CD8-positive, alpha-beta memory T cell (primary cell): ENCODE measurements at regions of chr18 and their contacts with region 1.

Region 1: GRCh38 chr18:3062798-3063680 is 50.1 kb upstream of the LPIN2 start:
- DNase-seq: peak; percentile 40 to 82 (median 41)
- H3K4me3 ChIP-seq: peak overlapping the region; percentile 62
- H3K4me3 Mint-ChIP-seq: peak overlapping the region; percentile 23 to 92 (median 70)
- H3K27ac ChIP-seq: peak overlapping the region; percentile 83
- H3K27ac Mint-ChIP-seq: peak overlapping the region; percentile 70 to 98 (median 97)
- H3K4me1 ChIP-seq: peaks cover 64% of the 10 kb centered on the region
- H3K4me1 Mint-ChIP-seq: peaks cover 74 to 83% (median 80%) of the 10 kb centered on the region in 3 donors
- H3K27me3 ChIP-seq: no peaks in the 10 kb centered on the region
- H3K27me3 Mint-ChIP-seq: no peaks in the 10 kb centered on the region

Region 2: DNA sequence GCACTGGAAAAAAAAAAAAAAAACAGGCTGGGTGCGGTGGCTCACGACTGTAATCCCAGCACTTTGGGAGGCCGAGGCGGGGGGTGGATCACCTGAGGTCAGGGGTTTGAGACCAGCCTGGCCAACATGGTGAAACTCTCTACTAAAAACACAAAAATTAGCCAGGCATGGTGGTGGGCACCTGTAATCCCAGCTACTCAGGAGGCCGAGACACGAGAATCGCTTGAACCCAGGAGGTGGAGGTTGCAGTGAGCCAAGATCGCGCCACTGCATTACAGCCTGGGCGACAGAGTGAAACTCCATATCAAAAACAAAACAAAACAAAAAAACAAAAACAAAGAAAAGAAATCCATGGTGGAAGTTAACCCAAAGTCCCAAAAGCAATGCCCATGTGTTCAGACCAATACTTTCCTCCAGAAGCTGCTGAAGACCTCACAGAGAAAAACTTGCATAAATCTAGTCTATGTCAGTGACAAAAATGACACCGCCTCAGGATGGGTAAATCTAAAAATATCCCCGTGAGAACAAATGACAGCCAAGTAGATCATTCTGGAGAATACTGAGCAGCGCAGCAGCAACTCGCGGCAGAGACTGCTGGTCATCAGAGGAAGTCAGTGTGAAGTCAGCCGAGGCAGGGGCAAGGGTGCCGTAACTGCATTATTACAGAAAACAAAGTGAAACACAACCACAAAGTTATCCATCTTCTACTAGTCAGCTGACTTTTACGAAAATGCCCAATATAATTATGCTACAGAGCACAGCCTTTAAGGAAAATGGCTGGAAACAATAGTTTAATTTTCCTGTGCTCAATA is 91.1 kb before region 1 on chr18:
- CTCF ChIA-PET with region 1: interaction called, 23 read pairs
- POLR2A ChIA-PET with region 1: interaction called, 8 read pairs
- DNase-seq: peak; percentile 51 to 87 (median 58)
- H3K4me3 ChIP-seq: peak overlapping the region; percentile 51
- H3K4me3 Mint-ChIP-seq: peak overlapping the region; percentile 81 to 91 (median 87)
- H3K27ac ChIP-seq: peak overlapping the region; percentile 71
- H3K27ac Mint-ChIP-seq: peak overlapping the region; percentile 96 to 100 (median 98)
- H3K4me1 ChIP-seq: peaks cover 95% of the 10 kb centered on the region
- H3K4me1 Mint-ChIP-seq: peaks cover 80 to 97% (median 95%) of the 10 kb centered on the region in 3 donors
- H3K27me3 ChIP-seq: no peaks in the 10 kb centered on the region
- H3K27me3 Mint-ChIP-seq: no peaks in the 10 kb centered on the region

Region 3: DNA sequence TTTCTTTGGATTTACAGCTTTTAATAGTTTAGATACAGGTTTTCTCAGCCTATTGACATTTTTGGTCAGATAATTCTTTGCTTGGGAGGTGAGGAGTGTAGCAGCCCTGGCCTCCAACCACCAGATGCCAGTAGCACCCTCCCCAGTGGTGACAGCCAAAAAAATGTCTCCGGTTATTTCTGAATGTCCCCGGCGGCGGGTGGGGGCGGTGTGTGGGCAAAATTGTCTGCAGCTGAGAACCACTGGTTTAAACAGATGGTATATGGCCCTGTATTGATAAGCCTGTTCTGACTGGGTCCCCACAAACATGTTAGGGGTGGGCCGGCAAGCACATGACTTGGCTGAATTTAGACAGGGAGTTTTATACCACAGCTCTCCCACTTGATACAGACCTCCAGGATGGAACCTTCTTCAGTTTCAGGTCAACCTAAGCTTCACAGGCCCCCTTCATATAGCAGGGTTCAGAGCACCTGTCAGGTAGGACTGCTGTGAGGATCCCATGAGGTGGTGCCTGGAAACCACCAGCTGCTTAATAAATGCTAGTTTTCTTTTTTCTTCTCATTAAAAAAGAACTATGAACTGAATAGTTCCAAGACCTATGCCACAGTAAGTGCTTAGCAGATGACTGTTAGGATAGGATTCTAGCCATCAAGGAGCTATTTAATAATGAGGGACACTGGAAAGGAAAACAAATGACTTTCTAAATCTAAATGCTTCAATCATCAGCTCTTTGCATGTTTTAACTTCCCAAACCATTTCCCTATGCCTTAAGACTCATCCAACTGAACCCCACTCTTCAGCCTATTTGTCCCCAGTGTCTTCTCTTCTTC is 68.2 kb before region 1 on chr18:
- CTCF ChIA-PET with region 1: interaction called, 144 read pairs
- POLR2A ChIA-PET with region 1: interaction called, 30 read pairs
- DNase-seq: peak; percentile 41 to 84 (median 73)
- H3K4me3 ChIP-seq: no peak overlapping the region
- H3K4me3 Mint-ChIP-seq: peak overlapping the region; percentile 39 to 86 (median 72)
- H3K27ac ChIP-seq: peak overlapping the region; percentile 39
- H3K27ac Mint-ChIP-seq: peak overlapping the region; percentile 15 to 85 (median 73)
- H3K4me1 ChIP-seq: peaks cover 59% of the 10 kb centered on the region
- H3K4me1 Mint-ChIP-seq: peaks cover 71 to 82% (median 82%) of the 10 kb centered on the region in 3 donors
- H3K27me3 ChIP-seq: no peaks in the 10 kb centered on the region
- H3K27me3 Mint-ChIP-seq: peaks cover 0 to 1% of the 10 kb centered on the region in 2 donors

Region 4: GRCh38 chr18:3037423-3037915 is 25.6 kb before region 1 on chr18:
- CTCF ChIA-PET with region 1: interaction called, 12 read pairs
- POLR2A ChIA-PET with region 1: interaction called, 10 read pairs
- DNase-seq: no peak
- H3K4me3 ChIP-seq: no peak overlapping the region
- H3K4me3 Mint-ChIP-seq: peak overlapping the region in 6 of 7 donors; percentile 13 to 59 (median 30)
- H3K27ac ChIP-seq: peak overlapping the region; percentile 40
- H3K27ac Mint-ChIP-seq: peak overlapping the region in 7 of 8 donors; percentile 53 to 92 (median 85)
- H3K4me1 ChIP-seq: peaks cover 7% of the 10 kb centered on the region
- H3K4me1 Mint-ChIP-seq: peaks cover 6 to 17% (median 16%) of the 10 kb centered on the region in 3 donors
- H3K27me3 ChIP-seq: no peaks in the 10 kb centered on the region
- H3K27me3 Mint-ChIP-seq: peaks cover 0 to 3% of the 10 kb centered on the region in 2 donors

Region 5: DNA sequence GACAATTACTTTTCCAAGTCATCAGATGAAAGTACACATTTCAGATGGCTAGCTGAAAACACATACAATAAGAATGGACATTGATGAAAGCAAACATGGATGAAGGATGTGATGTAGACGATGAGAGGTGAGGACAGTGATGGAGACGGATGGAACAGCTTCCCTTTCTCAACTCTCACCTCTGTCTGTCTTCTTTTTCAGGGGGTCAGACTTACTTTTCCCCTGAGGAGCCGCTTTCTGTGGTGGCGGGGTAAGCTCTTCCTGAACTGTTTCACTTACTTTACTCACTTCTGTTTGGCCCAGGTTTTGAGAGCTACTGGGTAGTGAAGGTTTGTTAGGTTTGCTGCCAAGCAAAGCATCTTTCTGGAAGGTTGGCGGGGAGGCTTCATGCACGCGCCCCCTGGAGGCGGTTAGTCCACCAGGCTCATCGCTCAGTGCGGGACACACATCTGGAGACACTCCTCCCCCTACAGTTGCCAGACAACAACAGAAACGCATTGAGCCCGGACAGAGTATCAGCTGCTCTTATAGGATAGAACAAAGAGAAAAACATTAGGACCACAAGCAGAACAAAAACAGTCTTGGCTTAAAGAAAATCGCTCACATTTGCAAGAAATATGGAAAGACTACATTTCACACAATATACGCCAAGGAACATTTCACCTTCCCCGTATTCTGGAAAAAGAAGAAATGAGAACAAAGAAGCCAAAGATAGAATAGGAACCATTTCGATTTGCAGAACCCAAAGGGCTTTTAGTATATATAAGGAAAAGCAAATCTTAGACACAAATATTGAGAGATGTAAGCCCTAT is 66.2 kb after region 1 on chr18:
- CTCF ChIA-PET with region 1: interaction called, 25 read pairs
- POLR2A ChIA-PET with region 1: interaction called, 3 read pairs
- DNase-seq: peak; percentile 62 to 84 (median 67)
- H3K4me3 ChIP-seq: no peak overlapping the region
- H3K4me3 Mint-ChIP-seq: no peak overlapping the region
- H3K27ac ChIP-seq: no peak overlapping the region
- H3K27ac Mint-ChIP-seq: peak overlapping the region in 4 of 8 donors; percentile 10 to 58 (median 29)
- H3K4me1 ChIP-seq: peaks cover 8% of the 10 kb centered on the region
- H3K4me1 Mint-ChIP-seq: peaks cover 9% of the 10 kb centered on the region in 3 donors
- H3K27me3 ChIP-seq: no peaks in the 10 kb centered on the region
- H3K27me3 Mint-ChIP-seq: peaks cover 0 to 3% of the 10 kb centered on the region in 2 donors

Region 6: GRCh38 chr18:3162181-3162580 is 99.1 kb after region 1 on chr18:
- CTCF ChIA-PET with region 1: no interaction called
- POLR2A ChIA-PET with region 1: no interaction called
- DNase-seq: no peak
- H3K4me3 ChIP-seq: no peak overlapping the region
- H3K4me3 Mint-ChIP-seq: no peak overlapping the region
- H3K27ac ChIP-seq: no peak overlapping the region
- H3K27ac Mint-ChIP-seq: peak overlapping the region in 1 of 8 donors; percentile 70
- H3K4me1 ChIP-seq: no peaks in the 10 kb centered on the region
- H3K4me1 Mint-ChIP-seq: no peaks in the 10 kb centered on the region
- H3K27me3 ChIP-seq: no peaks in the 10 kb centered on the region
- H3K27me3 Mint-ChIP-seq: peaks cover 0 to 1% of the 10 kb centered on the region in 2 donors

Region 7: GRCh38 chr18:3350566-3351527 is 287.8 kb after region 1 on chr18:
- CTCF ChIA-PET with region 1: no interaction called
- POLR2A ChIA-PET with region 1: no interaction called
- DNase-seq: no peak
- H3K4me3 ChIP-seq: no peak overlapping the region
- H3K4me3 Mint-ChIP-seq: no peak overlapping the region
- H3K27ac ChIP-seq: no peak overlapping the region
- H3K27ac Mint-ChIP-seq: no peak overlapping the region
- H3K4me1 ChIP-seq: no peaks in the 10 kb centered on the region
- H3K4me1 Mint-ChIP-seq: peaks cover 2 to 3% (median 2%) of the 10 kb centered on the region in 3 donors
- H3K27me3 ChIP-seq: no peaks in the 10 kb centered on the region
- H3K27me3 Mint-ChIP-seq: peaks cover 3 to 17% of the 10 kb centered on the region in 2 donors

Region 8: DNA sequence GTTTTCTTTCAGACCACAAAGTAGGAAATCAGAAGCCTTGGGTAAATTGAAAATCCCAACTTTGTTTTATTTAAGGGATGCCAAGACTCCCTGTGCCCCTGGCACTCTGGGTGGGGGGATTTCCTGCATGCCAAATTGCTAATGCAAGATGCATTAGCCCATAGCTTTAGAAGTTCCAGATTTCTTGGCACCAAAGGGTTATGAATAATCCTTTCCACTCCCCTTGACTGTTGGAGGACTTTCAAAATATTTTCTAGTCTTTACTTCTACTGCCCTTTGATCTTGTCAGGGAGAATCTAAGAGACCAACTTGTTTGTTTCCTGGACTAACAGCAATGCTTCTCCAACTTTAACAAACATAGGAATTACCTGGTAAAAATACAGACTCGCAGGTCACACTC is 305.2 kb after region 1 on chr18:
- CTCF ChIA-PET with region 1: no interaction called
- POLR2A ChIA-PET with region 1: no interaction called
- DNase-seq: no peak
- H3K4me3 ChIP-seq: no peak overlapping the region
- H3K4me3 Mint-ChIP-seq: no peak overlapping the region
- H3K27ac ChIP-seq: no peak overlapping the region
- H3K27ac Mint-ChIP-seq: no peak overlapping the region
- H3K4me1 ChIP-seq: no peaks in the 10 kb centered on the region
- H3K4me1 Mint-ChIP-seq: no peaks in the 10 kb centered on the region
- H3K27me3 ChIP-seq: no peaks in the 10 kb centered on the region
- H3K27me3 Mint-ChIP-seq: peaks cover 0 to 9% of the 10 kb centered on the region in 2 donors